Activated CD8-positive, alpha-beta T cell treated with anti-CD3 and anti-CD28 coated beads for 36 hours (primary cell): ENCODE measurements at regions of chr5 and their contacts with region 1.

Region 1: GRCh38 chr5:143824851-143825720 is 13.1 kb downstream of the HMHB1 start:
- DNase-seq: peak; percentile 91
- ATAC-seq: peak; percentile 83
- H3K4me3 Mint-ChIP-seq: no peak overlapping the region
- H3K27ac Mint-ChIP-seq: no peak overlapping the region
- H3K4me1 Mint-ChIP-seq: peaks cover 17% of the 10 kb centered on the region
- H3K27me3 Mint-ChIP-seq: no peaks in the 10 kb centered on the region
- CTCF ChIP-seq: peak; percentile 81

Region 2: DNA sequence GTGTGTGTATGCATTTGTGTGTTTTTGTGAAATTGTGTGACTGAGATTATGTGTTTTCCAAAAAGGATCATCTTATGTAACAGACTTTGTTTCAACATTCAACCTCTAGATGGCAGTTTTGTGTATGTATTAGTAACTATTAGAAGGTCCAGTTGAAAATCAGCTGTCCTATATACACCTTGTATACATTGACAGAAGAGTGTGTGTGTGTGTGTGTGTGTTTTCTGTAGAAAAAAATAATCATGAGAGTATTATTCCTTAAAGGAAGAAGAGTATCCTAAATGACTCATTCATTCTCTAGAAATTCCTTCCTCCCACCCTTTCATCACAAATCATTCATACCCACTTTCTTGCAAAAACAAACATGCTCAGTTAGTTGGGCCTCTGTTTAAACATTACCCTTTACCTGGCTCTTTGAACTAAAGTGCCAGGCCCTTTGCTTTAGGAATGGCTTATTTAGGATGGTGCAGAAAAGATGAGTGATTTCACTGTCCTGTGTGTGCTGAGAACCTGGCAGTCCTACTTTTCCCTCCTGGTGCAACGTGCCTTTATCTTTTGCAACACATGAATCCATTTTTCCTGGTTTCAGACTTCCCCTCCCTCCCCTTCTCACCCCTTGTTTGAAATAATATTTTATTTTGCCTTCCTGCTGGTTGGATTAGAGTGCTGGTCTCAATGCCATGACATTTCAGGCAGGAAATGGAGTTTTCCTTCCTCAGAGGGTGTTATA is 902.7 kb before region 1 on chr5:
- CTCF ChIA-PET with region 1: interaction called, 5 read pairs
- POLR2A ChIA-PET with region 1: no interaction called
- intact Hi-C with region 1: loop called (anchors 10 kb)
- DNase-seq: no peak
- ATAC-seq: no peak
- H3K4me3 Mint-ChIP-seq: no peak overlapping the region
- H3K27ac Mint-ChIP-seq: peak overlapping the region; percentile 26
- H3K4me1 Mint-ChIP-seq: peaks cover 37% of the 10 kb centered on the region
- H3K27me3 Mint-ChIP-seq: no peaks in the 10 kb centered on the region
- CTCF ChIP-seq: peak; percentile 41

Region 3: DNA sequence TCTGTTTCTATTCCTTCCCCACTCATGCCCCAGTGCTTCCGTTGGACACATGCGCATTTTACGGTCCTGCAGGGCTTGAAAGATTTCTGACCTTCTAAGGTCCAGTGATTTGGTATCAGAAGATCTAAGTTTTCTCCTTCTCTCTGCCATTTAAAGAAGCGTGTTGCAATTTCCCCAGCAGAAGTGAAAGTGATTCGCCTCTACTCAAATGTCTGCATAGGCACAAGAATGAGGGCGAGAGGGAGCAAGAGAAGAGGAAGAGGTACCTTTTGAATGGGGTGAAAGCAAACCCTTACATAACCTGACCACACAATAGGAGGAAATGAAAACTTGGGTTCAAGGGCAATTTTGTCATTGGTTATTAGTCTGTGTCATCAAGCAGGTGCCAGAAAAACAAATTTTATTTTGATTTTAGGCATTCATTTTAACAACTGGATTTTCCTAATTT is 389.9 kb before region 1 on chr5:
- CTCF ChIA-PET with region 1: no interaction called
- POLR2A ChIA-PET with region 1: no interaction called
- intact Hi-C with region 1: loop called (anchors 5 kb)
- DNase-seq: peak; percentile 49
- ATAC-seq: peak; percentile 25
- H3K4me3 Mint-ChIP-seq: peak overlapping the region; percentile 86
- H3K27ac Mint-ChIP-seq: peak overlapping the region; percentile 98
- H3K4me1 Mint-ChIP-seq: peaks cover 68% of the 10 kb centered on the region
- H3K27me3 Mint-ChIP-seq: no peaks in the 10 kb centered on the region
- CTCF ChIP-seq: no peak

Region 4: GRCh38 chr5:143693651-143694252 is 131.3 kb before region 1 on chr5:
- CTCF ChIA-PET with region 1: no interaction called
- POLR2A ChIA-PET with region 1: no interaction called
- intact Hi-C with region 1: loop called (anchors 10 kb)
- DNase-seq: peak; percentile 12
- ATAC-seq: peak; percentile 74
- H3K4me3 Mint-ChIP-seq: no peak overlapping the region
- H3K27ac Mint-ChIP-seq: peak overlapping the region; percentile 40
- H3K4me1 Mint-ChIP-seq: peaks cover 42% of the 10 kb centered on the region
- H3K27me3 Mint-ChIP-seq: peaks cover 4% of the 10 kb centered on the region
- CTCF ChIP-seq: no peak

Region 5: GRCh38 chr5:143837306-143837848 is 12.3 kb after region 1 on chr5:
- CTCF ChIA-PET with region 1: interaction called, 10 read pairs
- POLR2A ChIA-PET with region 1: interaction called, 4 read pairs
- intact Hi-C with region 1: no loop called
- DNase-seq: no peak
- ATAC-seq: no peak
- H3K4me3 Mint-ChIP-seq: no peak overlapping the region
- H3K27ac Mint-ChIP-seq: no peak overlapping the region
- H3K4me1 Mint-ChIP-seq: no peaks in the 10 kb centered on the region
- H3K27me3 Mint-ChIP-seq: peaks cover 1% of the 10 kb centered on the region
- CTCF ChIP-seq: no peak

Region 6: DNA sequence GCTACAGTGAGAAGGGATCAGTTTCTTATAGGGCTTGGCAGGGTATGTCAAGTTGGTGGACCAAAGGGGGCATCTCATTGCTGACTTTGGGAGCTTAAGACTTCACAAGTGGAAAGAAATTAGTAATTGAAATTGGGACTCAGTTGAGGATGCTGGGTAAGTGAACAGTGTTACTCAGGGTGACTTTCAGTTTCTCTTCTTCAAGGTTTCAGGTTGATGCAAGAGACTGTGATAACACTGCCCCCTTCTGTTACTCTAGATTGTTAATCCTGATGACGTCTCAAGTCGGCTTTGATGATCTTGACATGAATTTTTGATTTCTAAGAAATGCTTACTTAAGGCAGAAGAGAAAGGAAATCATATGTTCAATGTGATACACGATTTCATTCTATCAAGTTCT is 366.9 kb after region 1 on chr5:
- CTCF ChIA-PET with region 1: interaction called, 5 read pairs
- POLR2A ChIA-PET with region 1: no interaction called
- intact Hi-C with region 1: loop called (anchors 10 kb)
- DNase-seq: peak; percentile 47
- ATAC-seq: peak; percentile 81
- H3K4me3 Mint-ChIP-seq: no peak overlapping the region
- H3K27ac Mint-ChIP-seq: no peak overlapping the region
- H3K4me1 Mint-ChIP-seq: peaks cover 22% of the 10 kb centered on the region
- H3K27me3 Mint-ChIP-seq: no peaks in the 10 kb centered on the region
- CTCF ChIP-seq: peak; percentile 58